Endothelial cell of umbilical vein (primary cell): ENCODE measurements at regions of chr4 and their contacts with region 1.

Region 1: GRCh38 chr4:92387459-92388069 is 83.8 kb downstream of the GRID2 start:
- DNase-seq: peak; percentile 63
- H3K4me3 ChIP-seq: no peak overlapping the region
- H3K27ac ChIP-seq: no peak overlapping the region
- H3K4me1 ChIP-seq: no peaks in the 10 kb centered on the region
- H3K27me3 ChIP-seq: no peaks in the 10 kb centered on the region
- CTCF ChIP-seq: peak; percentile 46
- POLR2A ChIP-seq: no peak

Region 2: DNA sequence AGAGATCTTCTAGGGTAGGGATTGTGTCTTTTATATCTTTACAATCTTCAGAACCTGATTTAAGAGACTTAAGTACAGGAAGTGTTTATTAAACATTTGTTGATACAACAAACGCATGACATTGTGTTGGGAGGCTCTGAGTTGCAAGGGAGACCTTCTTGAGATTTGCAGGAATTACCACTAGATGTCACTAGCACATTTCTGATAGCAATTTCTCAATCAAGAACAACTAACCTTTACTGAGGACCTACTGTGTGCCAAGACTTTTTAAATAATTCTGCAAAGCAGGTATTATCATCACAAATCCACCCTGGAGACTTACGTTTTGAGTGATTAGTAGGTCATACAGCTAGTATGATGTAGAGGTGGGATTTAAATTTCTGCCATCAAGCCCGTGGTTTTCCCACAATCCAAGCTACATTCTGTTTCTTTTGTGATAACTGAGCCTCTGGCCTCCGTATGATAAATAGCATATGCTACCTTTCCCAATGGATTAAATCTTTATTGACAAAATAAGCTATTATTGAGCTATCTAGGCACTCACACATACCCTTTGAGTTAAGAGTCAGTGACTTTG is 1274.3 kb before region 1 on chr4:
- CTCF ChIA-PET with region 1: interaction called, 7 read pairs
- POLR2A ChIA-PET with region 1: no interaction called
- dilution Hi-C with region 1: no loop called
- intact Hi-C with region 1: loop called (anchors 1 kb)
- DNase-seq: peak; percentile 53
- H3K4me3 ChIP-seq: no peak overlapping the region
- H3K27ac ChIP-seq: no peak overlapping the region
- H3K4me1 ChIP-seq: no peaks in the 10 kb centered on the region
- H3K27me3 ChIP-seq: no peaks in the 10 kb centered on the region
- CTCF ChIP-seq: peak; percentile 31 to 48
- POLR2A ChIP-seq: no peak

Region 3: GRCh38 chr4:92317047-92317446 is 70.5 kb before region 1 on chr4:
- CTCF ChIA-PET with region 1: no interaction called
- POLR2A ChIA-PET with region 1: no interaction called
- dilution Hi-C with region 1: no loop called
- intact Hi-C with region 1: no loop called
- DNase-seq: no peak
- H3K4me3 ChIP-seq: no peak overlapping the region
- H3K27ac ChIP-seq: no peak overlapping the region
- H3K4me1 ChIP-seq: no peaks in the 10 kb centered on the region
- H3K27me3 ChIP-seq: no peaks in the 10 kb centered on the region
- CTCF ChIP-seq: no peak
- POLR2A ChIP-seq: no peak

Region 4: DNA sequence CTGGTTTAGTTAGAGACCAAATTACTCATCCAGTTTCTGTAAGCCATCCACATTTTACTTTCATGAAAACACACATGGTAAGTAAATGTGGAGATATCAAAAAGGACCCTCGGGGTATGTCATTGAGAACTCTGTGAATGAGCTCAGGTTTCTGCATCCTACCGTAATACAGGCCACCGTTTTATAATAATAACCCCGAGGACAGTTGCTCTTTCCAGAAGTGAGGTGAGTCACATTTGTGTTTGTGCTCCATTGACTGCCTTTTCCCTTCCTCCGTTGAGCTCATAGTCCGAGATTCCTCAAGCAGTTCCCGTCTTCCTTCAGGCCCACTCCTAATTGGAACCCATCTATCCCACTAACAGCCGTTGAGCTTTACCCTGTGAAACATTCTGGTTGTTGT is 11.5 kb after region 1 on chr4:
- CTCF ChIA-PET with region 1: interaction called, 10 read pairs
- POLR2A ChIA-PET with region 1: no interaction called
- dilution Hi-C with region 1: no loop called
- intact Hi-C with region 1: no loop called
- DNase-seq: no peak
- H3K4me3 ChIP-seq: no peak overlapping the region
- H3K27ac ChIP-seq: no peak overlapping the region
- H3K4me1 ChIP-seq: no peaks in the 10 kb centered on the region
- H3K27me3 ChIP-seq: no peaks in the 10 kb centered on the region
- CTCF ChIP-seq: no peak
- POLR2A ChIP-seq: no peak

Region 5: DNA sequence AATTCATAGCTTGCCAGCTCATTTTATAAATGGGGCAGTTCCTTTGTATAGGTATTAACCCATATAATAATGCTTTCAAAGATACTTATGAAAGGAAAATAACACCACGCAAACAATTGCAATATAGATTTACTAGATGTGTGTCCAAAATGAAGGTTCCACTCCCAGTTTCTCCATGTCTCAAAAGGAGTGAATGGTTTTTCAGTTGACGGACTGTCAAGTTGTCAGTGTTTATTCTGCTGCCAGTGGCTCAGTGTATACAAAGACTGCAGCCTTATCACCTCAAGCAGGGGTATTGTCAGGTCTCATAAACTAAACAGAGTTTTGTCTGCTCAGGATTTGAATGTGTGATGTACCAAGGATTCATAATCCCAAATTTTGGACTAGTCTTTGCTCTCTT is 855.7 kb after region 1 on chr4:
- CTCF ChIA-PET with region 1: no interaction called
- POLR2A ChIA-PET with region 1: no interaction called
- dilution Hi-C with region 1: no loop called
- intact Hi-C with region 1: no loop called
- DNase-seq: no peak
- H3K4me3 ChIP-seq: no peak overlapping the region
- H3K27ac ChIP-seq: no peak overlapping the region
- H3K4me1 ChIP-seq: no peaks in the 10 kb centered on the region
- H3K27me3 ChIP-seq: no peaks in the 10 kb centered on the region
- CTCF ChIP-seq: no peak
- POLR2A ChIP-seq: no peak

Region 6: DNA sequence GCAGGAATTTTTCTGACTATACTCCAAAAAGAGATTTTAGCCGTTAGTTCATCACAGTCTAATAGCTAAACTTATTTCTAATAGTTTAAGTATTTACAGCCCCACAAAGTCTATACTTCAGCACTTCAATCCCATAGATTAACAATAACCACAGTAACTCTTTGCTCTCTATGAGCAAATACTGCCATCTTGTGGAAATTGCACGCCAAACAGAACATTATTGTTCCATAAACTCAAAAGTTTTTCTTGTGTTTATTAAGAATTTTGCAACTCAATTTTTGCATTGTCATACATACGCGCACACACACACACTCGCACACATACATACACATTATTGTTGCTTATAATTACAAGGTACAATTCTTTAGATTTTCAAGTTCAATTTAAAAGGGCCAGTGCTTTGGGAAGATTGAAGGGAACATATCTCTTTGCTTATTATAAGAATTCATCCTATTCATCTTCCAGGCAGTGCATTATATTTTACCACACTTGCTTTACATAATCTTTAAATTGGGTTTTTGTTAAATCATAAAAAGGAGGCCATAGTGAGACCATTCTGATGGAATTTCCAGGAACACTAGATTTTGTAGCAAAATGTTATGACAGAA is 1377.2 kb after region 1 on chr4:
- CTCF ChIA-PET with region 1: no interaction called
- POLR2A ChIA-PET with region 1: no interaction called
- dilution Hi-C with region 1: no loop called
- intact Hi-C with region 1: loop called (anchors 10 kb)
- DNase-seq: peak; percentile 56
- H3K4me3 ChIP-seq: no peak overlapping the region
- H3K27ac ChIP-seq: no peak overlapping the region
- H3K4me1 ChIP-seq: no peaks in the 10 kb centered on the region
- H3K27me3 ChIP-seq: peaks cover 0 to 2% of the 10 kb centered on the region in 2 experiments
- CTCF ChIP-seq: peak; percentile 40 to 48
- POLR2A ChIP-seq: no peak